ENCODE measurements at regions of chr10 and their contacts with region 1.

Region 1: DNA sequence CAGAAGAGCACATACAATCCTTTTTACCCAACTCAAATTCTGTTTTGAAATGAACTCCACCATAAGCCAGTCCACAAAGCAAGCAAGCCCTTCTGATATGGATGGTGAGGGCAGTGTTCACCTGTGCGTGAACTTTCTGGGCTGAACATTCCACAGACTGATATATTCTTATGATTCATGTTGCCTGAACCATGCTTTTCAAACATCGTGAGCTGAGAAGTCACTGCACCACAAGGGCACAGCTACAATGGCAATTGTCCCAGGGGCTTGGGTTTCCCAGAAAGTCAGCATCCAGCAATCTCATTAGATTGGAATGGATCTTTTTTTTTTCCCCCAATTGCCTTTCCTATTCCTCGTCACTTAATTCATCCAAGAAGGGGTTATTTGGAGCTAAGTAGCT is 86.9 kb upstream of the ZNF438 start:
- DNase-seq: no peak
- H3K4me3 ChIP-seq: no peak overlapping the region
- H3K27ac ChIP-seq: no peak overlapping the region
- H3K4me1 ChIP-seq: peaks cover 3% of the 10 kb centered on the region
- H3K27me3 ChIP-seq: no peaks in the 10 kb centered on the region
- CTCF ChIP-seq: no peak
- EP300 ChIP-seq: no peak
- POLR2A ChIP-seq: no peak

Region 2: GRCh38 chr10:30134171-30134945 is 984.2 kb before region 1 on chr10:
- intact Hi-C with region 1: no loop called
- DNase-seq: no peak
- H3K4me3 ChIP-seq: no peak overlapping the region
- H3K27ac ChIP-seq: no peak overlapping the region
- H3K4me1 ChIP-seq: no peaks in the 10 kb centered on the region
- H3K27me3 ChIP-seq: no peaks in the 10 kb centered on the region
- CTCF ChIP-seq: no peak
- EP300 ChIP-seq: no peak
- POLR2A ChIP-seq: no peak

Region 3: GRCh38 chr10:31399631-31400030 is 281.1 kb after region 1 on chr10:
- intact Hi-C with region 1: loop called in 1 of 4 experiments (anchors 5 kb)
- DNase-seq: no peak
- H3K4me3 ChIP-seq: no peak overlapping the region
- H3K27ac ChIP-seq: no peak overlapping the region
- H3K4me1 ChIP-seq: peaks cover under 1% of the 10 kb centered on the region
- H3K27me3 ChIP-seq: no peaks in the 10 kb centered on the region
- CTCF ChIP-seq: no peak
- EP300 ChIP-seq: no peak
- POLR2A ChIP-seq: no peak

Measured in ovary (tissue), 10 donors.